CD4-positive, alpha-beta T cell (primary cell): ENCODE measurements at regions of chr17 and their contacts with region 1.

Region 1: GRCh38 chr17:35088881-35089585 is 25.5 kb upstream of the RFFL start:
- DNase-seq: peak; percentile 80 to 96 (median 89)
- ATAC-seq: peak; percentile 74
- H3K4me3 ChIP-seq: peak overlapping the region; percentile 92
- H3K4me3 Mint-ChIP-seq: peak overlapping the region; percentile 99
- H3K27ac ChIP-seq: peak overlapping the region; percentile 88 to 94
- H3K27ac Mint-ChIP-seq: peak overlapping the region; percentile 98
- H3K4me1 ChIP-seq: peaks cover 46% of the 10 kb centered on the region
- H3K4me1 Mint-ChIP-seq: peaks cover 58% of the 10 kb centered on the region
- H3K27me3 ChIP-seq: no peaks in the 10 kb centered on the region
- H3K27me3 Mint-ChIP-seq: no peaks in the 10 kb centered on the region
- CTCF ChIP-seq: peak; percentile 72

Region 2: DNA sequence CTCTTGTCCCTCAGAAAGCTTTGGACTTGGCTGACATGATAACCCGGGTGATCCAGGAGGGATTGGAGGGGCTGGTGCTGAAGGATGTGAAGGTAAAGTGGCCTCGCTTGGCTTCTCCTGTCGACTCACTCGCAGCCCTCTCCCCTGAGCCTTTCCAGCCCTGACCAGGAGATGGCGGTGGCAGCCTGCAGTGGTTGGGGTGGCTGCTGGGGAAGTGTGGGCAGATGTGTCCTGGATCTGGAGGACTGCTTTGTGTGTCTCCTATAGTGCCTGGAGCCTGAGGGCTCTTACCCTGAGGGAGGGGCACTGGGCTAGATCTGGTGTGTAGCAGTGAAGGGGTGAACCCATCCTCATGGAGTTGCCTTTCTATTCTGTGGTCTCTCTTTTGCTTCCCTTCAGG is 90.8 kb before region 1 on chr17:
- CTCF ChIA-PET with region 1: interaction called, 24 read pairs
- POLR2A ChIA-PET with region 1: interaction called, 6 read pairs
- intact Hi-C with region 1: loop called (anchors 1 kb)
- DNase-seq: peak; percentile 69 to 88 (median 76)
- ATAC-seq: peak; percentile 98
- H3K4me3 ChIP-seq: no peak overlapping the region
- H3K4me3 Mint-ChIP-seq: no peak overlapping the region
- H3K27ac ChIP-seq: no peak overlapping the region
- H3K27ac Mint-ChIP-seq: peak overlapping the region; percentile 72
- H3K4me1 ChIP-seq: peaks cover 8% of the 10 kb centered on the region
- H3K4me1 Mint-ChIP-seq: peaks cover 6% of the 10 kb centered on the region
- H3K27me3 ChIP-seq: no peaks in the 10 kb centered on the region
- H3K27me3 Mint-ChIP-seq: no peaks in the 10 kb centered on the region
- CTCF ChIP-seq: peak; percentile 83

Region 3: GRCh38 chr17:35022536-35023063 is 66.4 kb before region 1 on chr17:
- CTCF ChIA-PET with region 1: interaction called, 15 read pairs
- POLR2A ChIA-PET with region 1: interaction called, 24 read pairs
- intact Hi-C with region 1: loop called in 1 of 2 experiments (anchors 2 kb)
- DNase-seq: peak; percentile 37 to 88 (median 72)
- ATAC-seq: peak; percentile 97
- H3K4me3 ChIP-seq: peak overlapping the region; percentile 15
- H3K4me3 Mint-ChIP-seq: peak overlapping the region; percentile 12
- H3K27ac ChIP-seq: peak overlapping the region; percentile 84 to 87
- H3K27ac Mint-ChIP-seq: peak overlapping the region; percentile 95
- H3K4me1 ChIP-seq: peaks cover 35% of the 10 kb centered on the region
- H3K4me1 Mint-ChIP-seq: peaks cover 63% of the 10 kb centered on the region
- H3K27me3 ChIP-seq: no peaks in the 10 kb centered on the region
- H3K27me3 Mint-ChIP-seq: no peaks in the 10 kb centered on the region
- CTCF ChIP-seq: no peak

Region 4: GRCh38 chr17:35052780-35053179 is 36.3 kb before region 1 on chr17:
- CTCF ChIA-PET with region 1: interaction called, 11 read pairs
- POLR2A ChIA-PET with region 1: interaction called, 10 read pairs
- intact Hi-C with region 1: loop called (anchors 1 to 5 kb)
- DNase-seq: no peak
- ATAC-seq: no peak
- H3K4me3 ChIP-seq: no peak overlapping the region
- H3K4me3 Mint-ChIP-seq: peak overlapping the region; percentile 69
- H3K27ac ChIP-seq: peak overlapping the region; percentile 78 to 85
- H3K27ac Mint-ChIP-seq: peak overlapping the region; percentile 92
- H3K4me1 ChIP-seq: peaks cover 86% of the 10 kb centered on the region
- H3K4me1 Mint-ChIP-seq: peaks cover 76% of the 10 kb centered on the region
- H3K27me3 ChIP-seq: no peaks in the 10 kb centered on the region
- H3K27me3 Mint-ChIP-seq: no peaks in the 10 kb centered on the region
- CTCF ChIP-seq: no peak

Region 5: GRCh38 chr17:35141681-35142466 is 52.8 kb after region 1 on chr17 and contains the start of gene NLE1:
- CTCF ChIA-PET with region 1: interaction called, 4 read pairs
- POLR2A ChIA-PET with region 1: interaction called, 3 read pairs
- intact Hi-C with region 1: loop called in 1 of 2 experiments (anchors 1 kb)
- DNase-seq: peak; percentile 84 to 93 (median 88)
- ATAC-seq: peak; percentile 97
- H3K4me3 ChIP-seq: peak within 1 kb of the TSS; percentile 98
- H3K4me3 Mint-ChIP-seq: peak within 1 kb of the TSS; percentile 90
- H3K27ac ChIP-seq: peak within 1 kb of the TSS; percentile 13 to 64
- H3K27ac Mint-ChIP-seq: peak within 1 kb of the TSS; percentile 75
- H3K4me1 ChIP-seq: peaks cover 28% of the 10 kb centered on the region
- H3K4me1 Mint-ChIP-seq: peaks cover 17% of the 10 kb centered on the region
- H3K27me3 ChIP-seq: no peaks in the 10 kb centered on the region
- H3K27me3 Mint-ChIP-seq: no peaks in the 10 kb centered on the region
- CTCF ChIP-seq: peak; percentile 92
- total RNA-seq, gene NLE1: 8.9 to 9.5 TPM

Region 6: DNA sequence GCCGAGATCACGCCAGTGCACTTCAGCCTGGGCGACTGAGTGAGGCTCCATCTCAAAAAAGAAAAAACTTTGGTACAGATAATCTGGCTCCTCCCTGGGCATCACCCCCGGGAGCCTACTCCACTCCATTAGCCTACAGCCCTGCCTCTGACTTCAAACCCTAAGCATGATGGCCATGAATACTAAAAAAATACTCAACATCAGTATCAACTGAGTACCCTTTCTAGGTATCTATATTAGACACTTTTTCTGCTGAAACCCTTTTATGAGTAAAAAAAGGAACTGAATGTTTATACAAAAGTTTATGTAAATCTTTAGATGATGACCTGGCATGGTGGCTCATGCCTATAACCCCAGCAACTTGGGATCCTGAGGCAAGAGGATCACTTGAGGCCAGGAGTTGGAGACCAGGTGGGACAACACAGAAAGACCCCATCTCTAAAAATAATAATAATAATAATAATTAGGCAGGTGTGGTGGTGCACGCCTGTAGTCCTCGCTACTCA is 834.6 kb after region 1 on chr17:
- CTCF ChIA-PET with region 1: no interaction called
- POLR2A ChIA-PET with region 1: no interaction called
- intact Hi-C with region 1: no loop called
- DNase-seq: no peak
- ATAC-seq: no peak
- H3K4me3 ChIP-seq: no peak overlapping the region
- H3K4me3 Mint-ChIP-seq: no peak overlapping the region
- H3K27ac ChIP-seq: no peak overlapping the region
- H3K27ac Mint-ChIP-seq: no peak overlapping the region
- H3K4me1 ChIP-seq: peaks cover 5% of the 10 kb centered on the region
- H3K4me1 Mint-ChIP-seq: peaks cover 7% of the 10 kb centered on the region
- H3K27me3 ChIP-seq: no peaks in the 10 kb centered on the region
- H3K27me3 Mint-ChIP-seq: no peaks in the 10 kb centered on the region
- CTCF ChIP-seq: no peak